Activated naive CD4-positive, alpha-beta T cell treated with anti-CD3 and anti-CD28 coated beads, Interleukin-2, amount 10 ng/mL, durations not matched to agents 7 days and 5 days (primary cell): ENCODE measurements at regions of chr9 and their contacts with region 1.

Region 1: GRCh38 chr9:114653556-114654159 is 3.9 kb downstream of the TEX53 start:
- DNase-seq: peak; percentile 89
- H3K4me3 Mint-ChIP-seq: no peak overlapping the region
- H3K27ac Mint-ChIP-seq: peak overlapping the region; percentile 61
- H3K4me1 Mint-ChIP-seq: peaks cover 22% of the 10 kb centered on the region
- H3K27me3 Mint-ChIP-seq: no peaks in the 10 kb centered on the region

Region 2: DNA sequence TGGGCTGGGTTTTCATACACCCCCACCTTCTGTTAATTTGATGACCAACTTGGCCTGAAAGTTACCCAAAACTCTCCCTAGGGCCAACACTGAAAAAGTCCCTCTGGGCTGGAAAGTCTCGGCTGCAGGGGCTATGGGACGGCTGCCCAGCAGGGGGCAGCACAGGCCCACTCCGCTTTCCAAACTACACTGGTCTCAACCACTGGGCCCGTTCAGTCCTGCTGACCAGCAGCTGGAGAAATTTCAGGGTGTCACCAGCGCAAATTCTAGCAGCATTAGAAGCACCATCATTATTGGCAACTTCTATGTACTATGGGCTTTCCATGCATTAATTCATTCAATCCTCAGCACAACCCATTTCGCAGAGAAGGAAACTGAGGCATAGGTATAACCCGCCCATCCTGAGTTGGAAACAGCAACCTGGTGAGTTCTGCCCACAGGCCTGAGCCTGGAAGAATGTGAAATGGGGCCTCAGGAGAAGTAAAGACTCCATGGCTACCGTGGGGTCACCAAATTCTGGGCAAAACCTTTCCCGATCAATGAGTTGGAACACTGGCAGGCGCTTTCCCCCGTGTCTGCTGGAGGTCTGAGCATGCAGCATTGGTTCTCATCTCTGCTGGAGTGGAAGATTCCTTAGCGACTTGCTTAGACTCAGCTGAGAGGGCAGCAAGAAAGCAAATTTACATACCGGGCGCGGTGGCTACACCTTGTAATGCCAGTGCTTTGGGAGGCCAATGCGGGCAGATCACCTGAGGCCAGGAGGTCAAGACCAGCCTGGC is 314.3 kb before region 1 on chr9:
- CTCF ChIA-PET with region 1: interaction called, 10 read pairs
- DNase-seq: peak; percentile 62
- H3K4me3 Mint-ChIP-seq: no peak overlapping the region
- H3K27ac Mint-ChIP-seq: peak overlapping the region; percentile 24
- H3K4me1 Mint-ChIP-seq: peaks cover 14% of the 10 kb centered on the region
- H3K27me3 Mint-ChIP-seq: no peaks in the 10 kb centered on the region

Region 3: GRCh38 chr9:114413861-114414301 is 239.8 kb before region 1 on chr9:
- CTCF ChIA-PET with region 1: interaction called, 206 read pairs
- DNase-seq: no peak
- H3K4me3 Mint-ChIP-seq: no peak overlapping the region
- H3K27ac Mint-ChIP-seq: no peak overlapping the region
- H3K4me1 Mint-ChIP-seq: peaks cover 16% of the 10 kb centered on the region
- H3K27me3 Mint-ChIP-seq: peaks cover 13% of the 10 kb centered on the region

Region 4: GRCh38 chr9:114487607-114488300 is 165.9 kb before region 1 on chr9:
- CTCF ChIA-PET with region 1: interaction called, 77 read pairs
- DNase-seq: peak; percentile 68
- H3K4me3 Mint-ChIP-seq: no peak overlapping the region
- H3K27ac Mint-ChIP-seq: no peak overlapping the region
- H3K4me1 Mint-ChIP-seq: peaks cover 26% of the 10 kb centered on the region
- H3K27me3 Mint-ChIP-seq: peaks cover 13% of the 10 kb centered on the region

Region 5: GRCh38 chr9:114538241-114538640 is 115.4 kb before region 1 on chr9:
- CTCF ChIA-PET with region 1: interaction called, 19 read pairs
- DNase-seq: peak; percentile 44
- H3K4me3 Mint-ChIP-seq: no peak overlapping the region
- H3K27ac Mint-ChIP-seq: no peak overlapping the region
- H3K4me1 Mint-ChIP-seq: no peaks in the 10 kb centered on the region
- H3K27me3 Mint-ChIP-seq: peaks cover 31% of the 10 kb centered on the region

Region 6: GRCh38 chr9:114611516-114612271 is 42.0 kb before region 1 on chr9:
- CTCF ChIA-PET with region 1: interaction called, 17 read pairs
- DNase-seq: peak; percentile 41
- H3K4me3 Mint-ChIP-seq: peak overlapping the region; percentile 84
- H3K27ac Mint-ChIP-seq: peak overlapping the region; percentile 94
- H3K4me1 Mint-ChIP-seq: peaks cover 58% of the 10 kb centered on the region
- H3K27me3 Mint-ChIP-seq: no peaks in the 10 kb centered on the region